ENCODE measurements at regions of chr2 and their contacts with region 1.

Region 1: DNA sequence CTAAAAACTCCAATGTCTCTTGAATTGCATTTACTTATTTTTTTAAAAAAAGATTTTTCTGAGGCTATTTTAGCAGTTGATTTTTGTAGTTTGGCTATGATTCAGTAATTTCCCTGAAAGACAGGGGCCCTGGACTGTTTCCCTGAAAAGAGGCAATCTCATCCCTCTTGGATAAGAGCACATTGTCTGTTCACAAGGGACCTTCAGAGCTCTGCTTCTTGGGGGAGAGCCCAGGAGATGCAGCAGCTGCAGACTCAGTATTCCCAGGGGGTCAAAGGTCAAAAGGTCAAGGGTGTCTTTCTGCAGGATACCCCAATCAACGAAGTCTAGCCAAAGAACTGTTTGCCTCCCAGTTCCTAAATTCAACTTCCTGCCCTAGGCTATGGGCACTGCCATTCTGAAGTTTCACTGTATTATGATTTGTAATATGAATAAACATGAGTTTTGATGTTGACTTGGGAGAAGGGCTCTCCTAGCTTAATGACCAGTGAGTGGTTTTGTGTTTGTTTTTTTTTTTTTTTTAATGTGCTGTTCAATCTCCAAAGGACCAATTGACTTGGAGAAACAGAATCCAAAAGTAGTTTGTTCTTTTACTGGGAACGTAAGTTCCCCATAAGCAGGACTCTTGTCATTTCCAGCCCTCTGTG is 157.0 kb upstream of the SERPINE2 start:
- DNase-seq: no peak
- CTCF ChIP-seq: no peak

Region 2: DNA sequence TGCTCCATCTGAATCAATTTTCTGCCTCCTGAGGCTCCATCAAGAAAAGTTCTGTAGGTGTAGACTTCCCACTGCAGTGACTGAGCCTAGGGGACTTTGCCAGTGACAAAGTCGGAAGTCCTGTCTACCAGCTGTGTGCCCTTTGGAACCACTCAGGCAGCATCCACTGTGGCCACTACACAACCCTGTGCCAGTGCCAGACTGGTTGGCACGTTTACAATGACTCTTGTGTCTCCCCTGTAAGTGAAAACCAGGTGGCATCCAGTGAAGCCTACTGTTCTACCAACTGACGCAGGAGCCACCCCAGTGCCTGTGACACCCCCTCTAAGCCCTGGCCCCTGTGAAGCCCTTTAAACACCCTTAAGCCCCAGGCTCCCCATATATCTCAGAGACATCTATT is 24.8 kb before region 1 on chr2:
- CTCF ChIA-PET with region 1: no interaction called
- POLR2A ChIA-PET with region 1: no interaction called
- DNase-seq: no peak
- CTCF ChIP-seq: no peak

Region 3: GRCh38 chr2:224183086-224183485 is 13.0 kb before region 1 on chr2:
- CTCF ChIA-PET with region 1: interaction called, 12 read pairs
- POLR2A ChIA-PET with region 1: no interaction called
- DNase-seq: no peak
- CTCF ChIP-seq: no peak